Activated CD4-positive, alpha-beta T cell treated with anti-CD3 and anti-CD28 coated beads for 36 hours (primary cell): ENCODE measurements at regions of chr16 and their contacts with region 1.

Region 1: GRCh38 chr16:14632692-14633569 is at the start of gene BFAR:
- DNase-seq: peak; percentile 100
- ATAC-seq: peak; percentile 78
- H3K4me3 Mint-ChIP-seq: peak within 1 kb of the TSS; percentile 97
- H3K27ac Mint-ChIP-seq: peak within 1 kb of the TSS; percentile 99
- H3K4me1 Mint-ChIP-seq: peaks cover 51% of the 10 kb centered on the region
- H3K27me3 Mint-ChIP-seq: no peaks in the 10 kb centered on the region
- total RNA-seq, gene BFAR: 54.8 to 57.5 TPM

Region 2: DNA sequence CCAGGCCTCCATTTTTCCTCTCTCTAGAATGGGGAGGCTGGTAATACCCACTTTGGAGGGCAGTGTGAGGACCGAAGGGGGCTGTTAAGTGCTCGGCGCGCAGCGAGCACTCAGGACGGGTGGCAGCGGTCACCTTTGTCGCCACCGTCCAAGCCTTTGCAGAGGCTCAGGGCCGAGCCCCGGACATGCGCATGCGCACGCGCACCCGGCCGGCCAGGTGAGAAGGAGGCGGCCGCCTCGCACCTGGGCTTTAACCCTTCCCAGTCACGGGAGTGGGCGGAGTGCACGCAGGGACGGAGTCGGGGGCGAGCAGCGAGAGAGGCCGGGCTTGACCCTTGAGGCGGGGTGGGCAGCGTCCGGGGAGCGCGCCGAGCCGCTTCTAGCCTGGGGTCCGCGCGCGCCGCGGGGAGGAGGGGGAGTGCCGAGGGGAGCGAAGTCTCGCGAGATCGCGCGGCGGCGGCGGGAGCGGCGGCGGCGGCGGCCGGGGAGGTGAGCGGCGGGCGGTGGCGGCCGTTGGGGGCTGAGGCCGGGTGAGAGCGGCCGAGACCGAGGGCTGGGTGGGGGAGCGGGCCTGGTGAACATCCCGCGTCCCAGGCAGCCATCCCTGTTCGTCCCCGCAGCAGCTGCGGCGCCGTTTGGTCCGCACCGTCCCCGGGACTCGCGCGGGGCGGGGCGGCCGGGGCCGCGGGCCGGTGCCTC is 561.9 kb before region 1 on chr16 and contains the start of gene MRTFB:
- CTCF ChIA-PET with region 1: no interaction called
- POLR2A ChIA-PET with region 1: no interaction called
- intact Hi-C with region 1: loop called in 1 of 2 experiments (anchors 2 kb)
- DNase-seq: peak; percentile 89
- ATAC-seq: peak; percentile 89
- H3K4me3 Mint-ChIP-seq: peak within 1 kb of the TSS; percentile 82
- H3K27ac Mint-ChIP-seq: peak within 1 kb of the TSS; percentile 81
- H3K4me1 Mint-ChIP-seq: peaks cover 14% of the 10 kb centered on the region
- H3K27me3 Mint-ChIP-seq: peaks cover 3% of the 10 kb centered on the region
- total RNA-seq, gene MRTFB: 9.6 to 16.9 TPM

Region 3: GRCh38 chr16:14300705-14301168 is 332.2 kb before region 1 on chr16:
- CTCF ChIA-PET with region 1: no interaction called
- POLR2A ChIA-PET with region 1: no interaction called
- intact Hi-C with region 1: loop called in 1 of 2 experiments (anchors 5 kb)
- DNase-seq: peak; percentile 68
- ATAC-seq: peak; percentile 78
- H3K4me3 Mint-ChIP-seq: peak overlapping the region; percentile 63
- H3K27ac Mint-ChIP-seq: no peak overlapping the region
- H3K4me1 Mint-ChIP-seq: peaks cover 8% of the 10 kb centered on the region
- H3K27me3 Mint-ChIP-seq: peaks cover 15% of the 10 kb centered on the region

Region 4: DNA sequence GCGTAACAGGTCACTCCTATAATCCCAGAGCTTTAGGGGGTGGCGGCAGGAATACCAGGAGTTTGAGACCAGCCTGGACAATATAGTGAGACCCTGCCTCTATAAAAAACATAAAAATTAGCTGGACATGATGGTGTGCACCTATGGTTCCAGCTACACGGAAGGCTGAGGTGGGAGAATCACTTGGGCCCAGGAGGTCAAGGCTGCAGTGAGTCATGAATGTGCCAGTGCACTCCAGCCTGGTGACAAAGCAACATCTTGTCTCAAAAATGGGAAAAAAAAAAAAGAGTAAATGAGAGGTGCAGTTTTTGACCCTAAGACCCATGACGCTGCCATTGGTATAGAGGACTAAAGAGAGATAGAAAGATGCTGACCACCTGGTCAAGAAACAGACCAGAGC is 18.9 kb before region 1 on chr16:
- CTCF ChIA-PET with region 1: no interaction called
- POLR2A ChIA-PET with region 1: no interaction called
- intact Hi-C with region 1: no loop called
- DNase-seq: no peak
- ATAC-seq: no peak
- H3K4me3 Mint-ChIP-seq: no peak overlapping the region
- H3K27ac Mint-ChIP-seq: no peak overlapping the region
- H3K4me1 Mint-ChIP-seq: no peaks in the 10 kb centered on the region
- H3K27me3 Mint-ChIP-seq: no peaks in the 10 kb centered on the region

Region 5: DNA sequence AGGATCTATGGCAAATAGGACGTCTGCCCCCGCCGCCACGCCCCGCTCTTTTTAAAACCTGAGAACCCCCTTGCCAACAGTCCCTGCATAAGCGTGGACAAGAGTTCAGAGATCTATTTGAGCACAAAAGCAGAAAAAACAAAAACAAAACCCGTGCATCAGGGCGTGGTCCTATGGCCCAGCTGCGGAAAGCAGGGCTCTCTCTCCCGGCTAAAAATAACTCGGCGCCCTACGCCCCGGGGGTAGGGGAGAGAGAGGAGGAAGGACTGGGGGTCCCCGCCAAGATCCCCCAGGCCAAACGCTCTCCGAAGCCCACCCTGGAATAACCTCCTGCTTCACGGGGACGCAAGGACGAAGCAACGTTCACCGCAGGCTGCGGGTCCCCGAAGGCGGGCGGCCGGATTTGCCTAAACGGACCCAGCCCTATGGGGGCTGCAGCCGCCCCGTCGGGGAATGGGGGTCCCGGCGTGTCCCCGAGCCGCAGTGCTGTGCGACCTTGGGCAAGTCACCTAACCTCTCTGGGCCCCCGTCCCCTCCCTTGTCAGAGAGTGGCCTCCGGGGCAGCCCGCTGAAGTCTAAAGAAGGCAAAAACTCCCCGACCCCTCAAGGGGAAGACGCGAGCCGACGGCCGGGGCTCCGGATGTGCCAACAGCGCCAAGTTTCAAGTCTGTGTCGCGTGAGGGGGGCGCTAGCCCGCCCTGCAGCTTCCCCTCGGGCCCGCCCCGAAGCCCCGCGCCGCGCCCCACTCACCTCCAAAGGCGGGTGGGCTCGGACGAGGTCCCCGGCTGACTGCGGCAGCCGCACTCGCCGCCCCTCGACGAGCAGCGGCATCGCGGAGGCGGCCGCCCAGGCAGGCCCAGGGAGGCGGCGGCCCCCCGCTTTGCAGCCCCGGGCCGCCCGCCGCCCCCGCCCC is 422.5 kb after region 1 on chr16:
- CTCF ChIA-PET with region 1: interaction called, 4 read pairs
- POLR2A ChIA-PET with region 1: no interaction called
- intact Hi-C with region 1: loop called (anchors 1 to 10 kb)
- DNase-seq: peak; percentile 73
- ATAC-seq: peak; percentile 51
- H3K4me3 Mint-ChIP-seq: peak overlapping the region; percentile 82
- H3K27ac Mint-ChIP-seq: peak overlapping the region; percentile 72
- H3K4me1 Mint-ChIP-seq: peaks cover 19% of the 10 kb centered on the region
- H3K27me3 Mint-ChIP-seq: no peaks in the 10 kb centered on the region

Region 6: DNA sequence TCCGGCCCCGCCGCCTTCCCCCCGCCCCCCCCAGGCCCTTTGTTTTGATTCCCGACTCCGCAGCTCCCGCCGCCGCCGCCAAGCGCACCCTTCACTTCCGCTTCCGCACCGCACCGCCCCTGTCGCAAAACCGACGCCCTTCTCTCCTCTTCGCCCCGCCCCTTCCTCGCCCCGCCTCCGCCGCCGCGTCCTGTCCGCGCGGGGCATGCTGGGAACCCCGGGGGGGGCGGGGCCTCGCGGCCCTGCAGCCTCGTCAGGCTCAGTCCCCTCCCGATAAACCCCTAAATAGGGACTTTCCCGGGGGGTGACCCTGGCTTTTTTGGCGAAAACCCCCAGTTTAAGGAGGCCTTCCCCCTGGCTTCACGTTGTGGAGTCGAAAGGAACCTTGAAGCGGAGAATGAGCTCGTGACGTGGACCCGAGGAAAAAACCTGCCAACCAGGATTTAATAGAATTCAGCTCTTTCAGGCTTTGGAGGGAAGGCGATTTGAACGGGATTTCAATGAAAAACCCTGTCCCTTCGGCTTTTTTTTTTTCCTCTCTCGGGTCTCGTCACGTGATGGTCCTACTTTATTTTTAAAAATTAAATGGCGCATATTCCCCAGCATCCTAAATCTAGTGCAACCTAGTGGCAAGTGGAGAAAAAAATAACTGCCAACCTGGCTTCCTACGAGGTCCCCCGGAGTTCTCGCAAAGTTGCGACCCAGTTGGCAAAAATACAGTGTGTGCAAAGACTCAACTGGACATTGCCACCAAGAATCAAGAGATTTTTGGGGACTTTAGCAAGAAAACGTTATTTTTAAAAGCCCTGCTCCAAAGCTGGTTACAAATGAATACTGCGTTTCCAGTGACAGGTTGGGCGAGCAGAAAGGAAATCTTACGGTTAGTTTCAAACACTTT is 1010.4 kb after region 1 on chr16 and contains the start of gene MARF1:
- CTCF ChIA-PET with region 1: no interaction called
- POLR2A ChIA-PET with region 1: no interaction called
- intact Hi-C with region 1: loop called (anchors 2 to 10 kb)
- DNase-seq: peak; percentile 100
- ATAC-seq: peak; percentile 70
- H3K4me3 Mint-ChIP-seq: peak within 1 kb of the TSS; percentile 84
- H3K27ac Mint-ChIP-seq: peak within 1 kb of the TSS; percentile 98
- H3K4me1 Mint-ChIP-seq: peaks cover 52% of the 10 kb centered on the region
- H3K27me3 Mint-ChIP-seq: no peaks in the 10 kb centered on the region
- total RNA-seq, gene MARF1: 50.2 to 72.5 TPM

Region 7: DNA sequence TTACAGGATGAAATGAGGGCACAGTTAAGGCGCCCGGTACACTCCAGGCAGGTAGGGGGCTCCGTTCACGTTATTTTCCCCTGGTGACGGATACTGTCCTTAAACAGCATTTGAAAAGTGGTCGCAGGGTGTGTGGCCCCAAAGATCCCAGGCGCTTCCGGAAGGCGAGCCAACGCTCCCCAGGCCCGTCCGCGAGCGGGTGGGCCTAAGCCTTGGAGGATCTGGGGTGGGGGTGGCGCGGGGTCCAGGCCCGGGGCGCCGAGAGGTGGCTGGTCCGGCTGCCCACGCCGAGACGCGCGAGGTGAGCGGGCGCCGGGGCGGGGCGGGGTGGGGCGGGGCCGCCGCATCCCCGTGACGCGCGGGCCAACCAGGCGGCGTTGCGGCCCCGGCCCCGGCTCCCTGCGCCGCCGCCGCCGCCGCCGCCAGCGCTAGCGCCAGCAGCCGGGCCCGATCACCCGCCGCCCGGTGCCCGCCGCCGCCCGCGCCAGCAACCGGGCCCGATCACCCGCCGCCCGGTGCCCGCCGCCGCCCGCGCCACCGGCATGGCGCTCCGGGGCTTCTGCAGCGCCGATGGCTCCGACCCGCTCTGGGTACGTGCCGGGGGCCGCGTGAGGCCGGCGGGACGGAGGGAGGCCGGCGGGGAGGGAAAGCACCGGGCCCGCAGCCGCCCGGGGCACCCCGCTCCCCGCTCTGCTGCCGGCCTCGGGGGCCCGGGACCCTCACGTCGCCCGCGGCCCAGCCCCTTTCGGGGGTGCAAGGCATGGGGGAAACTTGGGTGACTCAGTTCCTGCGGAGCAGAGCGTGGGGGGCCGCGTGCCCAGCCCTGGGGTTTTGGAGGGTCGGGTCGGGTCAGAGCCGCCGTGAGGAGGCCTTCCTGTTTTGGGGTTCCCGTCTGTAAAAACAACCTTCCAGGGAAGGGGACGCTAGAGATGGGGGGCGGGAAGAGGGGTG is 1316.6 kb after region 1 on chr16 and contains the start of gene ABCC1:
- CTCF ChIA-PET with region 1: no interaction called
- POLR2A ChIA-PET with region 1: interaction called, 3 read pairs
- intact Hi-C with region 1: loop called in 1 of 2 experiments (anchors 10 kb)
- DNase-seq: peak; percentile 73
- ATAC-seq: peak; percentile 69
- H3K4me3 Mint-ChIP-seq: peak within 1 kb of the TSS; percentile 95
- H3K27ac Mint-ChIP-seq: peak within 1 kb of the TSS; percentile 100
- H3K4me1 Mint-ChIP-seq: peaks cover 51% of the 10 kb centered on the region
- H3K27me3 Mint-ChIP-seq: no peaks in the 10 kb centered on the region
- total RNA-seq, gene ABCC1: 57.8 to 65.1 TPM